CD4-positive, alpha-beta memory T cell (primary cell): ENCODE measurements at regions of chr6 and their contacts with region 1.

Region 1: GRCh38 chr6:32843979-32844838 is at the start of gene PSMB8:
- DNase-seq: peak; percentile 97 to 100 (median 98)
- H3K4me3 ChIP-seq: peak within 1 kb of the TSS; percentile 89 to 98
- H3K4me3 Mint-ChIP-seq: peak within 1 kb of the TSS; percentile 94 to 100 (median 97)
- H3K27ac ChIP-seq: peak within 1 kb of the TSS; percentile 99
- H3K27ac Mint-ChIP-seq: peak within 1 kb of the TSS; percentile 99 to 100 (median 99)
- H3K4me1 ChIP-seq: peaks cover 81% of the 10 kb centered on the region
- H3K4me1 Mint-ChIP-seq: peaks cover 61 to 98% (median 72%) of the 10 kb centered on the region in 4 donors
- H3K27me3 ChIP-seq: no peaks in the 10 kb centered on the region
- H3K27me3 Mint-ChIP-seq: no peaks in the 10 kb centered on the region
- total RNA-seq, gene PSMB8: 134 to 138 TPM

Region 2: GRCh38 chr6:32177788-32178546 is 666.2 kb before region 1 on chr6 and contains the start of gene RNF5:
- CTCF ChIA-PET with region 1: no interaction called
- POLR2A ChIA-PET with region 1: interaction called, 10 read pairs
- intact Hi-C with region 1: no loop called
- DNase-seq: peak; percentile 96 to 99 (median 98)
- H3K4me3 ChIP-seq: peak within 1 kb of the TSS; percentile 74 to 87
- H3K4me3 Mint-ChIP-seq: peak within 1 kb of the TSS; percentile 92 to 100 (median 96)
- H3K27ac ChIP-seq: peak within 1 kb of the TSS; percentile 91
- H3K27ac Mint-ChIP-seq: peak within 1 kb of the TSS; percentile 97 to 100 (median 99)
- H3K4me1 ChIP-seq: peaks cover 79% of the 10 kb centered on the region
- H3K4me1 Mint-ChIP-seq: peaks cover 50 to 84% (median 66%) of the 10 kb centered on the region in 4 donors
- H3K27me3 ChIP-seq: no peaks in the 10 kb centered on the region
- H3K27me3 Mint-ChIP-seq: no peaks in the 10 kb centered on the region
- total RNA-seq, gene RNF5: 44.2 to 47.7 TPM

Region 3: GRCh38 chr6:32832535-32832934 is 11.7 kb before region 1 on chr6:
- CTCF ChIA-PET with region 1: interaction called, 39 read pairs
- POLR2A ChIA-PET with region 1: interaction called, 20 read pairs
- intact Hi-C with region 1: no loop called
- DNase-seq: no peak
- H3K4me3 ChIP-seq: no peak overlapping the region
- H3K4me3 Mint-ChIP-seq: no peak overlapping the region
- H3K27ac ChIP-seq: no peak overlapping the region
- H3K27ac Mint-ChIP-seq: peak overlapping the region in 2 of 7 donors; percentile 20 to 24
- H3K4me1 ChIP-seq: peaks cover 37% of the 10 kb centered on the region
- H3K4me1 Mint-ChIP-seq: peaks cover 40 to 56% (median 43%) of the 10 kb centered on the region in 4 donors
- H3K27me3 ChIP-seq: no peaks in the 10 kb centered on the region
- H3K27me3 Mint-ChIP-seq: no peaks in the 10 kb centered on the region

Region 4: GRCh38 chr6:32940656-32941213 is 96.5 kb after region 1 on chr6 and contains the start of gene HLA-DMB:
- CTCF ChIA-PET with region 1: interaction called, 3 read pairs
- POLR2A ChIA-PET with region 1: interaction called, 10 read pairs
- intact Hi-C with region 1: no loop called
- DNase-seq: peak; percentile 68 to 82 (median 70)
- H3K4me3 ChIP-seq: peak within 1 kb of the TSS; percentile 57 to 73
- H3K4me3 Mint-ChIP-seq: peak within 1 kb of the TSS; percentile 89 to 97 (median 92)
- H3K27ac ChIP-seq: peak within 1 kb of the TSS; percentile 68
- H3K27ac Mint-ChIP-seq: peak within 1 kb of the TSS; percentile 90 to 99 (median 94)
- H3K4me1 ChIP-seq: peaks cover 57% of the 10 kb centered on the region
- H3K4me1 Mint-ChIP-seq: peaks cover 46 to 60% (median 53%) of the 10 kb centered on the region in 4 donors
- H3K27me3 ChIP-seq: no peaks in the 10 kb centered on the region
- H3K27me3 Mint-ChIP-seq: no peaks in the 10 kb centered on the region
- total RNA-seq, gene HLA-DMB: 7.9 to 8.1 TPM

Region 5: DNA sequence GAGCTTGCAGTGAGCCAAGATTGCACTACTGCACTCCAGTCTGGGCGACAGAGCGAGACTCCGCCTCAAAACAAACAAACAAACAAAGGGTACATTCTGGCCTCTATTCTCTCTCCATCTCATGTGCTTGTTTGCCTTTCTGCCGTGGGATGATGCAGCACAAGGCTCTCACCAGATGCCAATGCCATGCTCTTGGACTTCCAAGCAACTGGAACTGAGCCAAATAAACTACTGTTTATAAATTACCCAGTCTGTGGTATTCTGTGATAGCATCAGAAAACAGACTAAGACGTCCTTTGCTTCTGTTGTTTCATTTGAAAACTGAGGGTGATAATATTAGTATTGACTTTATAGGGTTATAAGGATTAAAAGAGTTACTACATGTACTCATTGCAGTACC is 120.6 kb after region 1 on chr6:
- CTCF ChIA-PET with region 1: interaction called, 8 read pairs
- POLR2A ChIA-PET with region 1: interaction called, 549 read pairs
- intact Hi-C with region 1: no loop called
- DNase-seq: no peak
- H3K4me3 ChIP-seq: no peak overlapping the region
- H3K4me3 Mint-ChIP-seq: no peak overlapping the region
- H3K27ac ChIP-seq: no peak overlapping the region
- H3K27ac Mint-ChIP-seq: peak overlapping the region; percentile 61 to 100 (median 67)
- H3K4me1 ChIP-seq: peaks cover 61% of the 10 kb centered on the region
- H3K4me1 Mint-ChIP-seq: peaks cover 42 to 69% (median 53%) of the 10 kb centered on the region in 4 donors
- H3K27me3 ChIP-seq: no peaks in the 10 kb centered on the region
- H3K27me3 Mint-ChIP-seq: no peaks in the 10 kb centered on the region

Region 6: GRCh38 chr6:33132081-33132524 is 287.9 kb after region 1 on chr6:
- CTCF ChIA-PET with region 1: no interaction called
- POLR2A ChIA-PET with region 1: no interaction called
- intact Hi-C with region 1: no loop called
- DNase-seq: no peak
- H3K4me3 ChIP-seq: no peak overlapping the region
- H3K4me3 Mint-ChIP-seq: no peak overlapping the region
- H3K27ac ChIP-seq: no peak overlapping the region
- H3K27ac Mint-ChIP-seq: no peak overlapping the region
- H3K4me1 ChIP-seq: no peaks in the 10 kb centered on the region
- H3K4me1 Mint-ChIP-seq: no peaks in the 10 kb centered on the region
- H3K27me3 ChIP-seq: peaks cover under 1% of the 10 kb centered on the region
- H3K27me3 Mint-ChIP-seq: peaks cover 8 to 18% of the 10 kb centered on the region in 2 donors